ENCODE measurements at regions of chrX and their contacts with region 1.

Region 1: DNA sequence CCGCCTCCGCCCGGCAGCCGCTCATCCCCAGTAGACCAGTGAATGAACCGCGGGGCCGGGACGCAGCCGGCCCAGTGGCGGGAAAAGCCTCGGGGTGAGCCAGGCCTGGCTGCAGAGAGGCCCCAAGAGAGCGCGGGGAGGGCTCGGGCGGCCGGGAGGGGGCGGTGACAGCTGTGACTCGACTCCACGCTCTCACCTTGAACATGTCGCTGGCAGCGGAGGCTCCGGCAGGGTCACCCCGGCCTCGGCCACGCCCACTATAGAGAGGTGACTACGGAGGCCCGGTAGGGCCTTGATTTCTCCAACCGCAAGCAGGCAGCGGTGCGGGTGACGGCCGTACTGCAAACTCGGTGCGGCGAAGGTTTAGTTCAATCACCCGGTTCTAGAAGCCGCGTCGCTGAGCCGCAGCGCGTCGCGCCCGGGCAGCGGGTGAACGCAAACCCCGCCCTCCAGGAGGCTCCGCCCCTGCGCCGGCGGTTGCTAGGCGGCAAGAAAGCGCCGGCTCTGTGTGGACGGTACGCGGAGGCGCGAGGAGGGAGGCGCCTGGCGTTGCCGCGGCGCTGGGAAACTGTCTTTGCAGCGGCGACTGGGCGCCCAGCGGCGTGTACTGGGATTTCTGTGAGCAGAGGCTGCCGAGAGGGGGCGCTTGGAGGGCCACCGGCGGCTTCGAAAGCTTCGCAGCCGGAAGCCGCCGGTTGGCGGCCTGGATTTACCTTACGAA is at the starts of genes APOO and CXorf58:
- DNase-seq: peak; percentile 88 to 94 (median 91)
- H3K4me3 ChIP-seq: peak within 1 kb of the TSS; percentile 60
- H3K27ac ChIP-seq: peak within 1 kb of the TSS; percentile 64 to 78
- H3K4me1 ChIP-seq: no peaks in the 10 kb centered on the region
- H3K27me3 ChIP-seq: no peaks in the 10 kb centered on the region
- CTCF ChIP-seq: peak; percentile 84 to 89 (median 84)
- EP300 ChIP-seq: no peak
- POLR2A ChIP-seq: no peak
- total RNA-seq, gene APOO: 6.0 to 35.3 (median 13.3) TPM
- total RNA-seq, gene CXorf58: 0.10 to 0.72 (median 0.34) TPM in 3 of 7 donors, not detected in the others

Region 2: GRCh38 chrX:23694606-23695005 is 213.1 kb before region 1 on chrX:
- intact Hi-C with region 1: loop called in 3 of 4 experiments (anchors 5 to 10 kb)
- DNase-seq: peak; percentile 50 to 68 (median 60)
- H3K4me3 ChIP-seq: no peak overlapping the region
- H3K27ac ChIP-seq: no peak overlapping the region
- H3K4me1 ChIP-seq: no peaks in the 10 kb centered on the region
- H3K27me3 ChIP-seq: no peaks in the 10 kb centered on the region
- CTCF ChIP-seq: no peak
- EP300 ChIP-seq: no peak
- POLR2A ChIP-seq: no peak

Region 3: DNA sequence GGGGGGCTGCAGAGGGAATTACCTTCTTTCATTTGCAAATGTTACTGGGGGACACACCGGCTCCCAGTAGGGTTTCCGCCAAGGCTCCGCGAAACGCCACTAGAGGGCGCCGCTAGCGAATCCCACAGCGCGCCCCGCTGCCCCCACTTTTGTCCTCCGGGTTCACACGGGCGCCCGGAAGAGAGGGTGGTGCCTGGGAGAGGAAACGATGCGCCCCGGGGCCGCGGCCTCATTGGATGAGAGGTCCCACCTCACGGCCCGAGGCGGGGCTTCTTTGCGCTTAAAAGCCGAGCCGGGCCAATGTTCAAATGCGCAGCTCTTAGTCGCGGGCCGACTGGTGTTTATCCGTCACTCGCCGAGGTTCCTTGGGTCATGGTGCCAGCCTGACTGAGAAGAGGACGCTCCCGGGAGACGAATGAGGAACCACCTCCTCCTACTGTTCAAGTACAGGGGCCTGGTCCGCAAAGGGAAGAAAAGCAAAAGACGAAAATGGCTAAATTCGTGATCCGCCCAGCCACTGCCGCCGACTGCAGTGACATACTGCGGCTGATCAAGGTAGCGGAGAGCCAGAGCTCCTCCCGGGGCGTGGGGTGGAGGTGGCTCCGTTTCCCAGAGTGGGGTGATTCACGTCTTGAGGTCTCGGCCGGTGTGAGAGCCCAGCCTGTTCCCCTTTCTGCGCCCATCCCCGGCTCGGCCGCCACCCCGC is 124.6 kb before region 1 on chrX and contains the start of gene SAT1:
- intact Hi-C with region 1: loop called (anchors 1 to 10 kb)
- DNase-seq: peak; percentile 93 to 96 (median 95)
- H3K4me3 ChIP-seq: peak within 1 kb of the TSS; percentile 54
- H3K27ac ChIP-seq: peak within 1 kb of the TSS; percentile 78 to 83
- H3K4me1 ChIP-seq: peaks cover 2% of the 10 kb centered on the region
- H3K27me3 ChIP-seq: no peaks in the 10 kb centered on the region
- CTCF ChIP-seq: peak; percentile 72 to 82 (median 76)
- EP300 ChIP-seq: no peak
- POLR2A ChIP-seq: peak; percentile 94
- total RNA-seq, gene SAT1: 58.7 to 3,021 (median 142) TPM

Region 4: DNA sequence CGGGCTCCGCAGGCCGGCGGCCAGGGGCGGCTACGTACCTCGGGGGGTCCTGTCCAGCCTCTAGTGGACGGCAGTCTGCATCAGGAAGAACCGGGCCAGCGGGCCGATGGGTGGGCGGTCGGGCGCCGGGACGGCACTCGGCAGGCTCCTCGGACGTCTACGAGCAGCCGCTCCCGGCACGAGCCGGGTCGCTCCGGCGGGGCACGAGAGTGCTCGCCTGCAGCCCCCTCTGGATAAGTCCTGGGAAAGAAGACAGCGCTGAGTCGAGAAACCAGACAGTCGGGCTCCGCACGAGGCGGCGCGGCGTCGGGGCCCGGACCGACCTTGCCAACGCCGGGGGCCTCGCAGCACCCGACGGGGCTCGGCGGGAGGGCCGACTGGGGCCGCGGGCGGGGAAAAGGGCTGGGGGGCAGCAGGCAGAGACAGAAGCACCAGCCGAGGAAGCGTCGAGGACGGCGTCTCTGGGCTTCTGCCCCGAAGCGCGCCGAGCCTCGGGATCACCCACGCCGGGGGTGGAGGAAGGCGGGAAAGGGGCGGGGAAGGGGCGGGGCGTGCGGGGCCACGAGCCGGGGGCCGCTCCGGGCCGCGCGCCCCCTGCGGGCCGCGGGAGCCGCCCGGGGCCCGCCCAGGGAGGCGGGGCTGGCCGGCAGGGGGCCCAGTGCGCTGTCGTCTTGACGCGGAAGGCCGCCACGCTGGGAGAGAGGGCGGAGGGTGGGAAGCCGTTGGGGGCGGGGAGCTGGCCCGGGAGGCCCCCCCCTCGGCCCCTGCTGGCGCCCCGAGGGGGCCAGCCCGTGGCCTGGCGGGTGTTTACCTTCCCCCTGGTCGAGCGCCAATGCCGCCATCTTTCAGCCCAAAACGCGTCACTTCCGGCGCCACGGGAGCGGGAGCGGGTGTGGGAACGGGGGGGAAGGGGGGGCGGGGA is 117.4 kb after region 1 on chrX:
- intact Hi-C with region 1: loop called in 1 of 4 experiments (anchors 10 kb)
- DNase-seq: peak; percentile 86 to 93 (median 92)
- H3K4me3 ChIP-seq: peak overlapping the region; percentile 65
- H3K27ac ChIP-seq: peak overlapping the region; percentile 88 to 90
- H3K4me1 ChIP-seq: no peaks in the 10 kb centered on the region
- H3K27me3 ChIP-seq: no peaks in the 10 kb centered on the region
- CTCF ChIP-seq: no peak
- EP300 ChIP-seq: peak; percentile 28
- POLR2A ChIP-seq: peak; percentile 76

Region 5: GRCh38 chrX:24054182-24055042 is 146.8 kb after region 1 on chrX and contains the start of gene EIF2S3:
- intact Hi-C with region 1: loop called in 1 of 4 experiments (anchors 5 kb)
- DNase-seq: peak; percentile 89 to 93 (median 92)
- H3K4me3 ChIP-seq: peak within 1 kb of the TSS; percentile 95
- H3K27ac ChIP-seq: peak within 1 kb of the TSS; percentile 50 to 91
- H3K4me1 ChIP-seq: no peaks in the 10 kb centered on the region
- H3K27me3 ChIP-seq: no peaks in the 10 kb centered on the region
- CTCF ChIP-seq: peak; percentile 62 to 85 (median 63)
- EP300 ChIP-seq: peak; percentile 73
- POLR2A ChIP-seq: peak; percentile 41
- total RNA-seq, gene EIF2S3: 121 to 384 (median 267) TPM